Endothelial cell of umbilical vein (primary cell): ENCODE measurements at regions of chr1 and their contacts with region 1.

Region 1: DNA sequence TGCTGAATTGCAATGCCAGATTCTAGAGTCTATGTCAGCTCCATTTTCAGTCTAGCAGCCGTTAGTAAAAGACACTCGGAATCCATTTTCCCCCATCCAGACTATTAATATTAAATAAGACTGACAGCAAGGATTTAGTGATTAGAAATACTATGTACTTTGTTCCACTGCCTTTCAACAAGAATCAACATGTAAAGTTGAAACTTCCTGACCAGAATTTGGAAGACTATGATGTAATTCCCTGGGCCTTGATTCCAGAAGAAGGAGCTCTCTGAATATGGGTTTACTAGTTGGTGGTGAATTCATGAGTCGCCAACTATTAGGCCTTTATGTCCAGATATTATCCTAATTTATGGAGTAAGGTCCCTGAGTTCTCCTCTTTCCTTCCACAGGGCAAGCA is 24.8 kb downstream of the KDM1A start:
- DNase-seq: no peak
- H3K4me3 ChIP-seq: no peak overlapping the region
- H3K27ac ChIP-seq: no peak overlapping the region
- H3K4me1 ChIP-seq: peaks cover 3% of the 10 kb centered on the region
- H3K27me3 ChIP-seq: no peaks in the 10 kb centered on the region
- CTCF ChIP-seq: no peak
- POLR2A ChIP-seq: no peak

Region 2: DNA sequence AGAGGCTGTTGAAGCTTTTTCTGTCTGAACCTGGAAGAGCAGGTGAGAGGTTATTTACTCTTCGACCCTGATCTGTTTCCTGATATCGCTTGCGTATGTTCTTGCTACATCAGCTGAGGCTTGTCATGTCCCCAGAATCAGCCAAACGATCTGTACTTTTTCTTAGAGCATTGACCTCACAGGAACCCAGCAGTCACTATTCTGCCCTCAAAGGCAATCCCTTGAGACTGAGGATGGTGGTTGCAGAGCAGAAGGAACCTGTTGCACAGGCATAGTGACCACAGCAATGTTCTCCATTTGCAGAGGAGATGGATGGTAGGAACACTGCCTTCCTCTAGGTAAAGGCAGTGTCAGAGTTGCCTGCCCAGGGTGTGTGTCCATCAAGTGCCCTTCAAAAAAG is 60.1 kb before region 1 on chr1:
- CTCF ChIA-PET with region 1: no interaction called
- POLR2A ChIA-PET with region 1: no interaction called
- dilution Hi-C with region 1: no loop called
- intact Hi-C with region 1: loop called (anchors 5 kb)
- DNase-seq: no peak
- H3K4me3 ChIP-seq: no peak overlapping the region
- H3K27ac ChIP-seq: no peak overlapping the region
- H3K4me1 ChIP-seq: no peaks in the 10 kb centered on the region
- H3K27me3 ChIP-seq: peaks cover 2 to 13% of the 10 kb centered on the region in 2 experiments
- CTCF ChIP-seq: no peak
- POLR2A ChIP-seq: no peak